Adrenal gland (tissue), 19 donors: ENCODE measurements at regions of chr12 and their contacts with region 1.

Region 1: GRCh38 chr12:64610149-64610678 is at the start of gene RASSF3:
- DNase-seq: peak; percentile 70 to 84 (median 76)
- H3K4me3 ChIP-seq: peak within 1 kb of the TSS; percentile 66 to 97 (median 94)
- H3K27ac ChIP-seq: peak within 1 kb of the TSS; percentile 52 to 93 (median 86)
- H3K4me1 ChIP-seq: peaks cover 19 to 23% of the 10 kb centered on the region in 2 donors
- H3K27me3 ChIP-seq: no peaks in the 10 kb centered on the region
- CTCF ChIP-seq: no peak
- POLR2A ChIP-seq: peak; percentile 36 to 74
- total RNA-seq, gene RASSF3: 28.8 to 75.8 (median 40.0) TPM

Region 2: GRCh38 chr12:64551698-64552097 is 58.5 kb before region 1 on chr12:
- intact Hi-C with region 1: loop called (anchors 5 to 10 kb)
- DNase-seq: no peak
- H3K4me3 ChIP-seq: no peak overlapping the region
- H3K27ac ChIP-seq: no peak overlapping the region
- H3K4me1 ChIP-seq: no peaks in the 10 kb centered on the region
- H3K27me3 ChIP-seq: no peaks in the 10 kb centered on the region
- CTCF ChIP-seq: no peak
- POLR2A ChIP-seq: no peak

Region 3: GRCh38 chr12:64679487-64679983 is 69.3 kb after region 1 on chr12:
- intact Hi-C with region 1: loop called (anchors 10 kb)
- DNase-seq: peak; percentile 71 to 90 (median 82)
- H3K4me3 ChIP-seq: no peak overlapping the region
- H3K27ac ChIP-seq: peak overlapping the region; percentile 41 to 82 (median 66)
- H3K4me1 ChIP-seq: peaks cover 42 to 67% of the 10 kb centered on the region in 2 donors
- H3K27me3 ChIP-seq: no peaks in the 10 kb centered on the region
- CTCF ChIP-seq: no peak
- POLR2A ChIP-seq: peak in 1 of 2 donors; percentile 6

Region 4: DNA sequence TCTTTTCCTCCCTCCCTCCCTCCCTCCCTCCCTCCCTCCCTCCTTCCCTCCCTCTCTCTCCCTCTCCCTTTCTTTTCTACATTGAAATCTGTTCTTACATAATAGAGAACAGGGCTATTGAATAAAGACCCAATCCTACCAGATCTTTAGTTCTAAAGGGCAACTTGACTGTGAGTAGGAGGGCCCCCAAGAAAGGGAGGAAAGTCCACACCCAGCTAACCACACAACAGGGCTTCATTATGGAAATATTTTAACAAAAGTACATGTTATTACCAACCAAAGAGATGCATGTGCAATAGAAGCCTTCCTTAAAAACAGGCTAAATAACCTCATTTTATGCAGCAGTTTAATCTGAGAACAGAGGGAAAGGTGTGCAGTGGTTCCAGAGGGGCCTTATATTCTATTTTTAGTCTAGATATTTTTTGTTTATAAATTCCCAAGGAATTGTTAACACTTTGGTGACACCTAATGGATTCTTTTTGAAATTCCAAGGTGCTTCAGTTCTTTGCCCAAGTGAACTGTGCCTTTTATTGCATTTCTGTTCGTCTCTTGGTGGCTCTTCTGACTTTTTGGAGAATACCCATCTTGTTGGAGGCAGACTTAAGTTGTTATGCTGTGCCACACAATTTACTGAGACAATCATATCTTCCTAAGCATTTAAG is 86.0 kb after region 1 on chr12:
- intact Hi-C with region 1: loop called in 1 of 2 experiments (anchors 10 kb)
- DNase-seq: no peak
- H3K4me3 ChIP-seq: no peak overlapping the region
- H3K27ac ChIP-seq: no peak overlapping the region
- H3K4me1 ChIP-seq: peaks cover 0 to 9% of the 10 kb centered on the region in 2 donors
- H3K27me3 ChIP-seq: no peaks in the 10 kb centered on the region
- CTCF ChIP-seq: peak in 5 of 6 experiments; percentile 14 to 65 (median 50)
- POLR2A ChIP-seq: no peak

Region 5: DNA sequence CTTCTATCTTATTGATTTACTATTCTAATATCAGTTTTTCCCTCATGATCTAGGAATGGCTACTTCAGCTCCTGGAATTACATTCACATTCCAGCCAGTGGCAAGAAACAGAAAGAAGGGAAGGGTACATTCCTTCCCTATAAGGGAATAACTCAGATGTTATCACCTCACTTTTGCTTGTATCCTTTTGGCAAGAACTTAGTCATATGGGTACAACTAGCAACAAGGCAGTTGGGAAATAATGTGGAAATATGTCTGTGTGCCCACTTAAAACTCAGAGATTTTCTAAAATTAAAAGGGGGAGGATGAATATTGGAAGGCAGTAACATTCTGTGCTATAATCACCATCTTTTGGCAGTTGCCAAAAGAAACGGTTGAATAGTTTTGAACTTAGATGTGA is 753.8 kb after region 1 on chr12:
- intact Hi-C with region 1: no loop called
- DNase-seq: no peak
- H3K4me3 ChIP-seq: no peak overlapping the region
- H3K27ac ChIP-seq: no peak overlapping the region
- H3K4me1 ChIP-seq: no peaks in the 10 kb centered on the region
- H3K27me3 ChIP-seq: no peaks in the 10 kb centered on the region
- CTCF ChIP-seq: no peak
- POLR2A ChIP-seq: no peak